ENCODE measurements at regions of chr2 and their contacts with region 1.

Region 1: GRCh38 chr2:191165176-191165643 is 14.4 kb upstream of the STAT4 start:
- DNase-seq: no peak
- ATAC-seq: peak; percentile 93
- H3K4me3 ChIP-seq: no peak overlapping the region
- H3K27ac ChIP-seq: no peak overlapping the region
- H3K4me1 ChIP-seq: no peaks in the 10 kb centered on the region
- H3K27me3 ChIP-seq: no peaks in the 10 kb centered on the region
- CTCF ChIP-seq: peak; percentile 41 to 81 (median 62); a peak in 5 of 6 replicates
- EP300 ChIP-seq: no peak
- POLR2A ChIP-seq: no peak
- RAD21 ChIP-seq: peak; percentile 95

Region 2: GRCh38 chr2:190468814-190469569 is 696.2 kb before region 1 on chr2:
- CTCF ChIA-PET with region 1: no interaction called
- POLR2A ChIA-PET with region 1: no interaction called
- RAD21 ChIA-PET with region 1: no interaction called
- SMC1A ChIA-PET with region 1: no interaction called
- in situ Hi-C with region 1: no loop called
- intact Hi-C with region 1: no loop called
- DNase-seq: no peak
- ATAC-seq: peak; percentile 81
- H3K4me3 ChIP-seq: peak overlapping the region; percentile 22; the same call in 1 of the 2 replicates
- H3K27ac ChIP-seq: peak overlapping the region; percentile 82
- H3K4me1 ChIP-seq: peaks cover 60% of the 10 kb centered on the region
- H3K27me3 ChIP-seq: no peaks in the 10 kb centered on the region
- CTCF ChIP-seq: no peak
- EP300 ChIP-seq: no peak
- POLR2A ChIP-seq: no peak
- RAD21 ChIP-seq: no peak

Region 3: DNA sequence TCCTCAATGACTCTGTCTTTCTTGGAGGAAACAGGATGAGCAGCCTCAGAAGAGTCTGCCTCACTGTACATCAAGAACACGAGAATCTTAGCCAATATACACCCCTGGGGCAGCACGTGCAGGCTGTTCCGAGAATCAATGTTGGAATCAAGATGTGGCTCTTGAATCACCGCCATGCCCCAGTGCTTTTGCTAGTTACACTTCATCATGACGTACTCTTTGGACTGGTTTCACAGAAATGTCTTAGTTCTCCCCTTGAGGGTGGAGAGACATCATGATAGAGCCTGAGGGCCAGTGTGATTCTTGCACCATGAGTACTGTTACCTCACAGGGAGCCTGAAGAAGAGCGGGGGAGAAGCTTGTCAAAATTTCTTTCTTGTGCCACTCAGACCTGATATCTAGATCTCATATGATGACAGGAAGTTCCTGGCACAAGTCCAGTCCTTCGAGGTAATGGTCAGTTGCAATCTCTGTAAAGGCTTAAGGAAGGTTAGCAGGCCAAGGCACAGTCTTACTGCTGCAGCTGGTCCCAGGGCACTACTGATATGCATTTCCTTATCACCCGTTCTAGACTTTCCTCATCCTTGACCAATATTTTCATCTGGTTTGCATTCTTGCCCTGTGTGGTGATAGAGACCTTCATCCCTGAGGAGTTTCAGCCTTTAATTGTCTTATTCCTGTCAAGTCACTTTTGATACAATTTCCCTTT is 13.8 kb after region 1 on chr2:
- CTCF ChIA-PET with region 1: interaction called, 18 read pairs
- POLR2A ChIA-PET with region 1: no interaction called
- RAD21 ChIA-PET with region 1: interaction called, 3 read pairs
- SMC1A ChIA-PET with region 1: interaction called, 4 read pairs
- in situ Hi-C with region 1: no loop called
- intact Hi-C with region 1: no loop called
- DNase-seq: no peak
- ATAC-seq: no peak; the same call in 2 of the 3 replicates
- H3K4me3 ChIP-seq: no peak overlapping the region
- H3K27ac ChIP-seq: no peak overlapping the region
- H3K4me1 ChIP-seq: peaks cover 14% of the 10 kb centered on the region; the same call in 1 of the 2 replicates
- H3K27me3 ChIP-seq: peaks cover 0 to 2% of the 10 kb centered on the region in 2 experiments; a peak in 1 of 4 replicates
- CTCF ChIP-seq: no peak
- EP300 ChIP-seq: no peak
- POLR2A ChIP-seq: no peak
- RAD21 ChIP-seq: no peak

Region 4: DNA sequence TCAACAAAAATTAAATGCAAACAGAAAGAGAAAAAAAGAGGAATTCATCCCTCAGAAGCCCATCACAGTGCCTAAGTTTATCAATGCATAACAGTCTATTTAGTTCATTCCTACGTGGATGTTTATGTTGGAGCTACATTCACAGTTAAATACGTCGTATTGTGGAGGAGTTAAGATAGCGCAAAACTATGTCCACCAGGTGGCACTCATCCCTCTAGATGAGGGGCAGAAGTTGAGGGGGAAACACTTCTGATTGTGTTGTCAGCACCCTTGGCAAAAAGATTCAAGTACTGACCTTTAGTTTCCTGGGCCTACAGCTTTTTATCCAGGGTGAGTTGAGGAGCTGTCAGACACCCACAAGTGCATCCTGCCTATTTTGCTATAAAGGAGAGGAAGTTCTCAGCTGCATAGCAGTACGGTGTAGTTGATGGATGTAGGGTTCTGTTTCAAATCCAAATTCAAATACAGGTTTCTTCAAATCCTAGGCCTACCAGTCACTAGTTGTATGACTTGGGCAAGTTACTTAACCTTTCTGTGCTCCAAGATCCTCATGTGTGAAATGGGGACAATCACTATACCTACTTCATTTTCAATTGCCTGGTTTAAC is 53.2 kb after region 1 on chr2:
- CTCF ChIA-PET with region 1: interaction called, 14 read pairs
- POLR2A ChIA-PET with region 1: no interaction called
- RAD21 ChIA-PET with region 1: no interaction called
- SMC1A ChIA-PET with region 1: no interaction called
- in situ Hi-C with region 1: no loop called
- intact Hi-C with region 1: loop called (anchors 2 kb)
- DNase-seq: no peak
- ATAC-seq: peak; percentile 85
- H3K4me3 ChIP-seq: no peak overlapping the region
- H3K27ac ChIP-seq: no peak overlapping the region
- H3K4me1 ChIP-seq: peaks cover 6% of the 10 kb centered on the region
- H3K27me3 ChIP-seq: no peaks in the 10 kb centered on the region
- CTCF ChIP-seq: peak; percentile 46 to 69 (median 47); a peak in 5 of 6 replicates
- EP300 ChIP-seq: no peak
- POLR2A ChIP-seq: no peak
- RAD21 ChIP-seq: peak; percentile 68

Region 5: GRCh38 chr2:191274413-191274815 is 109.2 kb after region 1 on chr2:
- CTCF ChIA-PET with region 1: no interaction called
- POLR2A ChIA-PET with region 1: no interaction called
- RAD21 ChIA-PET with region 1: no interaction called
- SMC1A ChIA-PET with region 1: no interaction called
- in situ Hi-C with region 1: no loop called
- intact Hi-C with region 1: no loop called
- DNase-seq: peak; percentile 8
- ATAC-seq: peak; percentile 36; the same call in 1 of the 3 replicates
- H3K4me3 ChIP-seq: no peak overlapping the region; the same call in 1 of the 2 replicates
- H3K27ac ChIP-seq: no peak overlapping the region
- H3K4me1 ChIP-seq: no peaks in the 10 kb centered on the region
- H3K27me3 ChIP-seq: peaks cover 0 to 3% of the 10 kb centered on the region in 2 experiments; a peak in 2 of 4 replicates
- CTCF ChIP-seq: no peak
- EP300 ChIP-seq: no peak
- POLR2A ChIP-seq: no peak
- RAD21 ChIP-seq: no peak

Region 6: GRCh38 chr2:191302459-191303139 is 137.4 kb after region 1 on chr2:
- CTCF ChIA-PET with region 1: interaction called, 3 read pairs
- POLR2A ChIA-PET with region 1: no interaction called
- RAD21 ChIA-PET with region 1: no interaction called
- SMC1A ChIA-PET with region 1: interaction called, 4 read pairs
- in situ Hi-C with region 1: no loop called
- intact Hi-C with region 1: loop called (anchors 1 kb)
- DNase-seq: no peak
- ATAC-seq: peak; percentile 82
- H3K4me3 ChIP-seq: no peak overlapping the region
- H3K27ac ChIP-seq: no peak overlapping the region
- H3K4me1 ChIP-seq: no peaks in the 10 kb centered on the region
- H3K27me3 ChIP-seq: peaks cover 0 to 3% of the 10 kb centered on the region in 2 experiments; a peak in 1 of 4 replicates
- CTCF ChIP-seq: peak; percentile 24 to 47 (median 38)
- EP300 ChIP-seq: no peak
- POLR2A ChIP-seq: no peak
- RAD21 ChIP-seq: peak; percentile 37

Region 7: DNA sequence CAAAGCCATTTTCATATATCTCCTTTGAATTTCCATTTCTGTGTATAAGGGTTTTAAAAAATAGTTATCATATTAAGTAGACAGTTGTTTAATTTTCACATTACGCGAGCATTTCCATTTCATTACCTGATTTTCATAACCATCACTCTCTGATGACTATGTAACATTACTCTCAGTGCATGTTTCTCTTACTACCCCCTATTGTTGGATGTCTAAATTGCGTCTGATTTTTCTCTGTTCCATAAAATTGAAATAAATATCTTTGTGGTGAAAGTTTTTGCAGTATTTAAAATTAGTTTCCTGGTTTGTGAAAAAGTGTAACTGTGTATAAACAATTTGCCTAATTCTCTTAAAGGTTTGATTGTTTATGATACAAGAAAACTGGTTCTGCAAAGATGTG is 203.8 kb after region 1 on chr2:
- CTCF ChIA-PET with region 1: no interaction called
- POLR2A ChIA-PET with region 1: no interaction called
- RAD21 ChIA-PET with region 1: no interaction called
- SMC1A ChIA-PET with region 1: no interaction called
- in situ Hi-C with region 1: no loop called
- intact Hi-C with region 1: loop called (anchors 5 kb)
- DNase-seq: no peak
- ATAC-seq: no peak
- H3K4me3 ChIP-seq: no peak overlapping the region
- H3K27ac ChIP-seq: no peak overlapping the region
- H3K4me1 ChIP-seq: no peaks in the 10 kb centered on the region
- H3K27me3 ChIP-seq: no peaks in the 10 kb centered on the region
- CTCF ChIP-seq: peak in 1 of 3 experiments; percentile 3; a peak in 1 of 6 replicates
- EP300 ChIP-seq: no peak
- POLR2A ChIP-seq: no peak
- RAD21 ChIP-seq: peak; percentile 27; the same call in 1 of the 2 replicates

Region 8: GRCh38 chr2:191521608-191522208 is 356.5 kb after region 1 on chr2:
- CTCF ChIA-PET with region 1: interaction called, 10 read pairs
- POLR2A ChIA-PET with region 1: no interaction called
- RAD21 ChIA-PET with region 1: interaction called, 12 read pairs
- SMC1A ChIA-PET with region 1: interaction called, 13 read pairs
- in situ Hi-C with region 1: loop called (anchors 5 kb)
- intact Hi-C with region 1: loop called (anchors 1 kb)
- DNase-seq: no peak
- ATAC-seq: 0 out of 3 replicates have a peak, but pooled peaks have one; percentile 31
- H3K4me3 ChIP-seq: no peak overlapping the region
- H3K27ac ChIP-seq: no peak overlapping the region
- H3K4me1 ChIP-seq: no peaks in the 10 kb centered on the region
- H3K27me3 ChIP-seq: no peaks in the 10 kb centered on the region; a peak in 2 of 4 replicates
- CTCF ChIP-seq: peak; percentile 51 to 66 (median 61)
- EP300 ChIP-seq: no peak
- POLR2A ChIP-seq: no peak
- RAD21 ChIP-seq: peak; percentile 69

Region 9: GRCh38 chr2:191691016-191691735 is 526.0 kb after region 1 on chr2:
- CTCF ChIA-PET with region 1: no interaction called
- POLR2A ChIA-PET with region 1: no interaction called
- RAD21 ChIA-PET with region 1: no interaction called
- SMC1A ChIA-PET with region 1: no interaction called
- in situ Hi-C with region 1: no loop called
- intact Hi-C with region 1: loop called (anchors 10 kb)
- DNase-seq: peak; percentile 59
- ATAC-seq: peak; percentile 68
- H3K4me3 ChIP-seq: no peak overlapping the region
- H3K27ac ChIP-seq: no peak overlapping the region
- H3K4me1 ChIP-seq: no peaks in the 10 kb centered on the region
- H3K27me3 ChIP-seq: no peaks in the 10 kb centered on the region
- CTCF ChIP-seq: peak; percentile 73 to 86 (median 77); a peak in 5 of 6 replicates
- EP300 ChIP-seq: no peak
- POLR2A ChIP-seq: no peak; the same call in 1 of the 2 replicates
- RAD21 ChIP-seq: peak; percentile 96

Measured in GM12878 (cell line).